CD8-positive, alpha-beta T cell (primary cell): ENCODE measurements at regions of chr15 and their contacts with region 1.

Region 1: GRCh38 chr15:38647683-38648082 is 83.1 kb upstream of the RASGRP1 start:
- DNase-seq: no peak
- ATAC-seq: no peak
- H3K4me3 ChIP-seq: no peak overlapping the region
- H3K4me3 Mint-ChIP-seq: peak overlapping the region; percentile 53
- H3K27ac ChIP-seq: no peak overlapping the region
- H3K27ac Mint-ChIP-seq: peak overlapping the region; percentile 96
- H3K4me1 ChIP-seq: peaks cover 79% of the 10 kb centered on the region
- H3K4me1 Mint-ChIP-seq: peaks cover 85% of the 10 kb centered on the region
- H3K27me3 ChIP-seq: no peaks in the 10 kb centered on the region
- H3K27me3 Mint-ChIP-seq: no peaks in the 10 kb centered on the region
- CTCF ChIP-seq: no peak

Region 2: DNA sequence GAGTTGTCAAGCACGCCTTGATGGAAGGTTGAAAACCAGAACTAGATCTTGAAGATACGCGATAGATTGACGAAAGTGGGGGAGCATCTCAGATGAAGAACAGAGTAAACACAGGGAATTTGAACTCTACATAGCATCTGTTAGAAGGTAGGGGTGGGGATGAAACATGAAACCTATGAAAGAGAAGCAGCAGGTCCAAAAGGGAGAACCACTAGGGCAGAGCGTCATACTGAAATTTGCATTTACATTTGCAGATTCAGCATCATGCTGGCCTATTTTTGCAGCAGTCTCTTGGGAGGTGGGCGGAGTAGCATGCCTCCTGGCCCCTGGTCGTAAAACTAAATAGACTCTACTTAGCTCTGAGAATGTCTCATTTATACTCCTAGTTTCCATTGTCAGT is 36.9 kb before region 1 on chr15:
- CTCF ChIA-PET with region 1: interaction called, 5 read pairs
- POLR2A ChIA-PET with region 1: interaction called, 14 read pairs
- intact Hi-C with region 1: no loop called
- DNase-seq: peak in 3 of 9 experiments; percentile 28 to 53 (median 28)
- ATAC-seq: peak; percentile 78
- H3K4me3 ChIP-seq: no peak overlapping the region
- H3K4me3 Mint-ChIP-seq: peak overlapping the region; percentile 13
- H3K27ac ChIP-seq: peak overlapping the region in 1 of 2 experiments; percentile 69
- H3K27ac Mint-ChIP-seq: peak overlapping the region; percentile 93
- H3K4me1 ChIP-seq: peaks cover 41% of the 10 kb centered on the region
- H3K4me1 Mint-ChIP-seq: peaks cover 54% of the 10 kb centered on the region
- H3K27me3 ChIP-seq: no peaks in the 10 kb centered on the region
- H3K27me3 Mint-ChIP-seq: no peaks in the 10 kb centered on the region
- CTCF ChIP-seq: no peak

Region 3: GRCh38 chr15:38631126-38632075 is 16.3 kb before region 1 on chr15:
- CTCF ChIA-PET with region 1: interaction called, 17 read pairs
- POLR2A ChIA-PET with region 1: interaction called, 10 read pairs
- intact Hi-C with region 1: loop called in 1 of 2 experiments (anchors 2 kb)
- DNase-seq: no peak
- ATAC-seq: no peak
- H3K4me3 ChIP-seq: no peak overlapping the region
- H3K4me3 Mint-ChIP-seq: peak overlapping the region; percentile 1
- H3K27ac ChIP-seq: no peak overlapping the region
- H3K27ac Mint-ChIP-seq: peak overlapping the region; percentile 3
- H3K4me1 ChIP-seq: peaks cover 19% of the 10 kb centered on the region
- H3K4me1 Mint-ChIP-seq: peaks cover 26% of the 10 kb centered on the region
- H3K27me3 ChIP-seq: no peaks in the 10 kb centered on the region
- H3K27me3 Mint-ChIP-seq: no peaks in the 10 kb centered on the region
- CTCF ChIP-seq: no peak

Region 4: DNA sequence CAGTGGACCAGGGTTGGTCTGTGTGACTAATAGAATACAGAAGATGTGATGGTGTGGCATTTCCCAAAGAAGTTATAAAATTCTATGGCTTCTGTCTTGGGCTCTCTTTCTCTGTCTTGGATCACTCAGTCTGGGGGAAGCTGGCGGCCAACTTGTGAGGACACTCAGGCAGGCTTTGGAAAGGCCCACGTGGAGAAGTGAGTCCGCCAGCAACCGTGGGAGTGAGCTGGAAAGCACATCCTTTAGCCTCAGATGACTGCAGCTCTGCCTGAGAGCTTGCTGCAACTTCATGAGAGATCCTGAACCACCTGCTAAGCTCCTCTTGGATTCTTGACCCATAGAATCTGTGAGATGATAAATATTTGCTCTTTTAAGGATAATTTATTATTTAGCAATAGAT is 11.1 kb before region 1 on chr15:
- CTCF ChIA-PET with region 1: interaction called, 17 read pairs
- POLR2A ChIA-PET with region 1: interaction called, 10 read pairs
- intact Hi-C with region 1: loop called in 1 of 2 experiments (anchors 2 kb)
- DNase-seq: no peak
- ATAC-seq: no peak
- H3K4me3 ChIP-seq: no peak overlapping the region
- H3K4me3 Mint-ChIP-seq: no peak overlapping the region
- H3K27ac ChIP-seq: no peak overlapping the region
- H3K27ac Mint-ChIP-seq: no peak overlapping the region
- H3K4me1 ChIP-seq: peaks cover 22% of the 10 kb centered on the region
- H3K4me1 Mint-ChIP-seq: peaks cover 35% of the 10 kb centered on the region
- H3K27me3 ChIP-seq: no peaks in the 10 kb centered on the region
- H3K27me3 Mint-ChIP-seq: no peaks in the 10 kb centered on the region
- CTCF ChIP-seq: no peak

Region 5: DNA sequence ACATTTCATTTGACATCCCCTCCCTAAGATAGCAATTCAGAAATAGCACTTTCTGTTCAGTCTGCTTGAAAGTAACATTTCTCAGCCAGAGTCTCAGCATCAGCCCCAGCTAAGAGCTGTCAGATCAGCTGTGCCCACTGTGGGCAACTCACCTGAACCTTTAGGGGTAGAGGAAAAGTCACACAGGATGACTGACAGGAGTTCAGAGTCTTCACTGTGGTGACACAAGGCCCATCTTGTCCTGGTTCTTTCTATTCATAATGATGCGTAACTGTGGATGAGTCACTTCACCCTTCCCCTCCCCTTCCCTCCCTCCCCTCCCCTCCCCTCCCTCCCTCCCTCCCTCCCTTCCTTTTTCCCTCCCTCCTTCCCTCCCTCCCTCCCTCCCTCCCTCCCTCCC is 13.1 kb after region 1 on chr15:
- CTCF ChIA-PET with region 1: interaction called, 46 read pairs
- POLR2A ChIA-PET with region 1: interaction called, 105 read pairs
- intact Hi-C with region 1: no loop called
- DNase-seq: peak in 4 of 9 experiments; percentile 35 to 60 (median 46)
- ATAC-seq: peak; percentile 74
- H3K4me3 ChIP-seq: no peak overlapping the region
- H3K4me3 Mint-ChIP-seq: peak overlapping the region; percentile 1
- H3K27ac ChIP-seq: peak overlapping the region in 1 of 2 experiments; percentile 32
- H3K27ac Mint-ChIP-seq: peak overlapping the region; percentile 43
- H3K4me1 ChIP-seq: peaks cover 45% of the 10 kb centered on the region
- H3K4me1 Mint-ChIP-seq: peaks cover 66% of the 10 kb centered on the region
- H3K27me3 ChIP-seq: no peaks in the 10 kb centered on the region
- H3K27me3 Mint-ChIP-seq: no peaks in the 10 kb centered on the region
- CTCF ChIP-seq: no peak

Region 6: GRCh38 chr15:38671675-38672254 is 24.1 kb after region 1 on chr15:
- CTCF ChIA-PET with region 1: interaction called, 103 read pairs
- POLR2A ChIA-PET with region 1: interaction called, 105 read pairs
- intact Hi-C with region 1: no loop called
- DNase-seq: peak in 6 of 9 experiments; percentile 39 to 91 (median 64)
- ATAC-seq: peak; percentile 61
- H3K4me3 ChIP-seq: peak overlapping the region in 1 of 2 experiments; percentile 3
- H3K4me3 Mint-ChIP-seq: peak overlapping the region; percentile 61
- H3K27ac ChIP-seq: peak overlapping the region; percentile 70 to 84
- H3K27ac Mint-ChIP-seq: peak overlapping the region; percentile 97
- H3K4me1 ChIP-seq: peaks cover 77% of the 10 kb centered on the region
- H3K4me1 Mint-ChIP-seq: peaks cover 77% of the 10 kb centered on the region
- H3K27me3 ChIP-seq: no peaks in the 10 kb centered on the region
- H3K27me3 Mint-ChIP-seq: no peaks in the 10 kb centered on the region
- CTCF ChIP-seq: no peak

Region 7: DNA sequence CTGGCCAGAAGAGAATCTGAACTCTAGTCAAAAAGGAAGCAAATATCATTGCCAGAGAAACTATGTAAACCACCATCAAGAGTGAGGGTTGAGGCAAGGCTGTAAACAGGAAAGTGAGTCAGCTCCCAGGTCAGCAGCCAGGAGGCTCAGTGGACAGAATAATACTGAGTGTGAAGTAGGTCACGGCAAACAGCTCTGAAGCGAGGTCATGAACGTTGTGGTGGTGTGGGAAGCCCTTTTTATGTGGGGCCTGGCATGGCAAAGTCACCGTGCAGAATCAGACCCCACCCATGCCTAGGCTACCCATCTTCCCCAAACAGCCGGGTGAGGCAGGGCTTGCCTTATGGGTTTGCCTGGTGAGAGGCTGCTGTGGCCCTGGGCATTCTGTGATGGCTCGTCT is 977.1 kb after region 1 on chr15:
- CTCF ChIA-PET with region 1: no interaction called
- POLR2A ChIA-PET with region 1: no interaction called
- intact Hi-C with region 1: loop called in 1 of 2 experiments (anchors 5 kb)
- DNase-seq: peak; percentile 46 to 92 (median 76)
- ATAC-seq: peak; percentile 55
- H3K4me3 ChIP-seq: no peak overlapping the region
- H3K4me3 Mint-ChIP-seq: peak overlapping the region; percentile 70
- H3K27ac ChIP-seq: peak overlapping the region; percentile 54 to 88
- H3K27ac Mint-ChIP-seq: peak overlapping the region; percentile 99
- H3K4me1 ChIP-seq: peaks cover 71% of the 10 kb centered on the region
- H3K4me1 Mint-ChIP-seq: peaks cover 77% of the 10 kb centered on the region
- H3K27me3 ChIP-seq: no peaks in the 10 kb centered on the region
- H3K27me3 Mint-ChIP-seq: no peaks in the 10 kb centered on the region
- CTCF ChIP-seq: no peak

Region 8: GRCh38 chr15:39699516-39700374 is 1052.1 kb after region 1 on chr15:
- CTCF ChIA-PET with region 1: no interaction called
- POLR2A ChIA-PET with region 1: no interaction called
- intact Hi-C with region 1: no loop called
- DNase-seq: no peak
- ATAC-seq: no peak
- H3K4me3 ChIP-seq: no peak overlapping the region
- H3K4me3 Mint-ChIP-seq: no peak overlapping the region
- H3K27ac ChIP-seq: no peak overlapping the region
- H3K27ac Mint-ChIP-seq: no peak overlapping the region
- H3K4me1 ChIP-seq: no peaks in the 10 kb centered on the region
- H3K4me1 Mint-ChIP-seq: no peaks in the 10 kb centered on the region
- H3K27me3 ChIP-seq: no peaks in the 10 kb centered on the region
- H3K27me3 Mint-ChIP-seq: no peaks in the 10 kb centered on the region
- CTCF ChIP-seq: no peak